GM10248 (cell line): ENCODE measurements at regions of chr20 and their contacts with region 1.

Region 1: GRCh38 chr20:64119681-64120341 is 12.4 kb upstream of the NPBWR2 start:
- DNase-seq: no peak
- CTCF ChIP-seq: no peak

Region 2: DNA sequence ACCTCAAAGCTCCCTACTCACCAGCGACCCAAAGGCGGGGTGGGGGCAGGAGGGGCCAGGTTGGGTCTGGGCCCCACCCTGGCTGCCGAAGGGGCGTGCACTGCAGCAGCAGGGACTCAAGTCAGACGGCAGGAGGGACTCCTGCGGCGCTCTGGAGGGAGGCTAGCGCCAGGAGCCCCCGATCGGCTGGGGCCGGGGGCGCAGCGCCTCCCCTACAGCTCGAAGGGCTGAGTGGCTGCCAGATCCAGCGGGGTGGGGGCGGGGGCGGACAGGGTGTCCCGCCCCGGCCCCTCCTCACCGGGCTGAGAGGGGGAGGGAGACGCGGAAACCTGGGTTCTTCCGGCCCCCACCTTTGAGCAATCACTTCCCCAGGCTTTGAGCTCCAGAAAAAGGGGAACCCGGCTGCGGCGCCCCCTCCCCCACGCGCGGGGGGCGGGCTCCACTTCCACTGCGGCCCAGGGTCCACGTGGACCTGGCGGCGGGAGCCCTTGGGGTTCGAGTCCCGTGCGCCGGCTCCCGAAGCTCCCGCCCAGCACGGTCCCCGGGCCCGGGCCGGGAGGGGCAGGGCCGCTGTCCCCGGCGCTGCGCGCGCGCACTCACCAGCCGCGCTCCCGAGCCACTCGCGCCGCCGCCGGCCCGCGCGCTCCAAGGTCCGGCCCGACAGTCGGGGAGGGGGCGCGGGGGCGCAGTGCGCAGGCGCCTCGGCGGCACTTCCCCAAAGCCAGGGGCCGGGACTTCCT is 40.4 kb before region 1 on chr20 and contains the start of gene RGS19:
- CTCF ChIA-PET with region 1: interaction called, 24 read pairs
- POLR2A ChIA-PET with region 1: no interaction called
- DNase-seq: peak; percentile 92
- CTCF ChIP-seq: no peak

Region 3: GRCh38 chr20:64101731-64102621 is 17.8 kb before region 1 on chr20:
- CTCF ChIA-PET with region 1: interaction called, 64 read pairs
- POLR2A ChIA-PET with region 1: no interaction called
- DNase-seq: peak; percentile 85
- CTCF ChIP-seq: peak; percentile 81

Region 4: DNA sequence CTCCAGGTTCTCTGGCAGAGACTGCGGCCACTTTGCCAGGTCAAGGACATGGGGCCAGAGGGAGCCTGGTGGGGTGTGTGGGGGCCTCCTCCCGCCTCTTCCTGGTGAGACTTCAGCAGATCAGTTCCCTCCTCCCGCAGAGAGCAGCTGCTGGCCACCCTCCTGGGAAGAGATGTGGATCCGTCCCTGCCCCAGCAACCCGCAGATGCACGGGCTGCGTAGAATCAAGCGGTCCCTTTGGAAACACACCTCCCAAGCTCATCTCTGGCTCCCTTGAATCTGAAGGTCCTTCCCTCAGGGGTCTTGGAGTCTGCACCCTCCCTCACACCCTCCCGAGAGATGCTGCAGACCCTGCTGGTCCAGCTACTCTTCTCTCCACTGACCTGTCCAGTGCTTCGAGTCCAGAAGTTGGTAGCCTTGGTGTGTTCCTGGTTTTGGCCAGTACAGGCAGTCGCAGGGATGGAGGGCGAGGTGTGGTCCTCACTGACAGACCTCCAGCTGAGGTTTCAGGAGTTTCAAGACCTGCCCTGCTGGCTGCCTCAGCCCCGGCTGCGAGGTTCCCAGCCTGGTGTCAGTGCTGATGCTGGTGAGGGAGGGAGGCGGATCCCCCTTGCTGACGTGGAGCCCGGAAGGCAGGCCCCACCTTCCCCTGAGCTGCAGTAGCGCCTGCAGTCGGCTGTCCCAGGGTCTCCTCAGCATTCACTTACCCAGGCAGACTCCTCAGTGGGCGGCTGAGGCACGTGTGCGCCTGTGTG is 12.7 kb before region 1 on chr20 and contains the start of gene NPBWR2:
- CTCF ChIA-PET with region 1: interaction called, 64 read pairs
- POLR2A ChIA-PET with region 1: no interaction called
- DNase-seq: peak; percentile 69
- CTCF ChIP-seq: no peak

Region 5: GRCh38 chr20:64279826-64280459 is 160.1 kb after region 1 on chr20:
- CTCF ChIA-PET with region 1: no interaction called
- POLR2A ChIA-PET with region 1: no interaction called
- DNase-seq: no peak
- CTCF ChIP-seq: no peak